ENCODE measurements at regions of chr4 and their contacts with region 1.

Region 1: GRCh38 chr4:17810260-17811077 is at the starts of genes DCAF16 and NCAPG:
- DNase-seq: peak; percentile 99
- H3K4me3 ChIP-seq: peak within 1 kb of the TSS; percentile 55 to 97 (median 63)
- H3K27ac ChIP-seq: peak within 1 kb of the TSS; percentile 92 to 97 (median 96)
- H3K4me1 ChIP-seq: peaks cover 26 to 30% of the 10 kb centered on the region in 2 donors
- H3K27me3 ChIP-seq: no peaks in the 10 kb centered on the region
- CTCF ChIP-seq: no peak
- POLR2A ChIP-seq: peak in 1 of 2 donors; percentile 98
- total RNA-seq, gene DCAF16: 26.2 to 79.1 (median 42.9) TPM
- total RNA-seq, gene NCAPG: 0.56 to 1.3 (median 0.92) TPM in 3 of 4 donors, not detected in the other

Region 2: DNA sequence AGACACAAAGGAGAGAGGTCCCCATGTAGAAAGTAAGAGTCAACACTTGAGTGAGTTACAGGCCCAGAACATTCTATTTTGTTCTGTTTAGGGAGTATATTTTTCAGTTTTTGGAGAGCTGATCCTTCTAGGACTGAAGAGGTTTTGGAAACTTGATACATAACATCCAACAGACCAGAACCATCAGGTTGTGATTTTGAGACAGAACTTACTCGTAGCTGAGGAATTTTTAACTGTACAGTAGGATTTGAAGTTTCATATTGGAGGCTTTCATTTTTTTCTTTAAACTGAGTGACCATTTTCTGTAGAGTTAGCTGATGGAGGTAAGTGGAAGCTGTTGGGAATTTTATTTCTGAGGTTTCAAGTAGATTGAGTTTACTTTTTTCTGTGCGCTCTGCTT is 73.6 kb after region 1 on chr4:
- intact Hi-C with region 1: no loop called
- DNase-seq: no peak
- H3K4me3 ChIP-seq: no peak overlapping the region
- H3K27ac ChIP-seq: no peak overlapping the region
- H3K4me1 ChIP-seq: no peaks in the 10 kb centered on the region
- H3K27me3 ChIP-seq: no peaks in the 10 kb centered on the region
- CTCF ChIP-seq: no peak
- POLR2A ChIP-seq: no peak

Region 3: DNA sequence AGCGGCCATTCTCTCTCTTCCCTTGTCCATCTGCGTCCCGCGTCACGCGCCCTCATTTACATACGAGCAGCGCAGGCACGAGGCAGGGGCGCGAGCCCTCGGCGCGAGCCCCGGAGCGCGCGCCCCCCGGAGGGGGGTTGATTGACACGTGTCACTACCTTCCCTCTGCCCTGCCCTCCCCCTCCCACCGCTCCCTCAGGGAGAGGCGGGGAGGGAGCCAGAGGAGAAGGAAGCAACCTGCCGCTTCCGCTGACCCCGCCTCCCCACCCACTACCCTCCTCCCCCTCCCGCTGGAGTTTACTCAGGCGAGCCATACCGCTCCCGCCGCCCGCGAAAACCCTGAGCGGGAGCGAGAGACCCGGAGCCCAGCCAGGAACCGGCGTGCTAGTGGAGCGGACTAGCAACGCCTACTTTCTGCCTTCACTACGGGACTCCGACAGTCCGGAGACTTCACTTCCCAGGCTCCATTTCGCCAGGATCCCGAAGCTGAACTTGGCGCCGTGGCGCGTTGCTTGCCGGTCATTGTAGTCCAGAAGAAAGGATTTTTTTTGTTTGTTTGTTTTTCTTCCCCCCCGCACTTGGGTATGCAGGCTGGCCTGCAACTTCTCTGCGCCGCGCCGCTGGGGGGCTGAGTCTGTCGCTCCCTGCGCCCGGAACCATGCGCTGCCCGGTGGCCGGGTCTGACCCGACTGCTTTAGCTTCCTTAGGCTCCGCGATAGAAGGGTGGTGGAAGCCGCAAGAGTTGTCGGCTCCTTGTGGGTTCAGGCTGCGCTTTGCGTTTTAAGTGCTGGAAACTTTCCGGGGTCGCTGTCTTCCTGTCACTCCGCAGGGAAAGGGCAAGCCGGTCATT is 211.5 kb after region 1 on chr4 and contains the start of gene LCORL:
- intact Hi-C with region 1: loop called (anchors 10 kb)
- DNase-seq: peak; percentile 94 to 95
- H3K4me3 ChIP-seq: peak within 1 kb of the TSS; percentile 68 to 95 (median 84)
- H3K27ac ChIP-seq: peak within 1 kb of the TSS; percentile 45 to 91 (median 86)
- H3K4me1 ChIP-seq: peaks cover 0 to 9% of the 10 kb centered on the region in 2 donors
- H3K27me3 ChIP-seq: no peaks in the 10 kb centered on the region
- CTCF ChIP-seq: no peak
- POLR2A ChIP-seq: peak in 1 of 2 donors; percentile 89
- total RNA-seq, gene LCORL: 26.4 to 45.9 (median 33.8) TPM

Region 4: DNA sequence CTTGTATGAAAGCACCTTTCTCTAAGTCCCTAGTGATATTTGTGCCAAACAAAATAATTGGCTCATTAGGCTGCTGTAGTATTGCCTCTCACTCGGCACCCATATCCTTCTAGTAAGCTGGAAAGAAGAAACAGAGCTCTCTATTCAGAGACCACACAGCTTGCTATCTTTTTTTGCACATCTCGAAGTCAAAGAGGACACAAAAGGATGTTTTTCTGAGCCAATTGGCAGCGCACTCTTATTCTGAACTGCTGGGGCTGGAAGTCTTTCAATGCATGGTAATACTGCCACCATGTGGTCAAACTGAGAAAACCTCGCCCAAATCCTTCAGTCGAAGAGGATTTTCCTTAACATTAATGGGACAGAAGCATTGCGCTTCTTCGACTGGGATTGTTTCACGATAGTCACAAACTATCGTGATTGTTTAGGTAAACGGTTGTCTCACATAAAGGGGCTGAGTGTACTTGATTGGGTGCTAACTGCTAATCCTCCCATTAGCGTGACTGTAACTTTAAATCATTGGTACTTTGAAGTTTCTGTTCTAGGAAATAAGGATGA is 783.1 kb after region 1 on chr4:
- intact Hi-C with region 1: loop called (anchors 10 kb)
- DNase-seq: peak; percentile 33 to 46
- H3K4me3 ChIP-seq: no peak overlapping the region
- H3K27ac ChIP-seq: no peak overlapping the region
- H3K4me1 ChIP-seq: no peaks in the 10 kb centered on the region
- H3K27me3 ChIP-seq: no peaks in the 10 kb centered on the region
- CTCF ChIP-seq: peak in 5 of 6 experiments; percentile 57 to 87 (median 71)
- POLR2A ChIP-seq: no peak

Measured in thyroid gland (tissue), 4 donors.